MCF 10A (cell line): ENCODE measurements at regions of chr21 and their contacts with region 1.

Region 1: GRCh38 chr21:36945496-36946138 is 20.9 kb downstream of the HLCS start:
- DNase-seq: no peak
- H3K4me3 Mint-ChIP-seq: no peak overlapping the region
- H3K27ac Mint-ChIP-seq: no peak overlapping the region
- H3K4me1 Mint-ChIP-seq: peaks cover 7% of the 10 kb centered on the region
- H3K27me3 Mint-ChIP-seq: no peaks in the 10 kb centered on the region
- CTCF ChIP-seq: no peak

Region 2: DNA sequence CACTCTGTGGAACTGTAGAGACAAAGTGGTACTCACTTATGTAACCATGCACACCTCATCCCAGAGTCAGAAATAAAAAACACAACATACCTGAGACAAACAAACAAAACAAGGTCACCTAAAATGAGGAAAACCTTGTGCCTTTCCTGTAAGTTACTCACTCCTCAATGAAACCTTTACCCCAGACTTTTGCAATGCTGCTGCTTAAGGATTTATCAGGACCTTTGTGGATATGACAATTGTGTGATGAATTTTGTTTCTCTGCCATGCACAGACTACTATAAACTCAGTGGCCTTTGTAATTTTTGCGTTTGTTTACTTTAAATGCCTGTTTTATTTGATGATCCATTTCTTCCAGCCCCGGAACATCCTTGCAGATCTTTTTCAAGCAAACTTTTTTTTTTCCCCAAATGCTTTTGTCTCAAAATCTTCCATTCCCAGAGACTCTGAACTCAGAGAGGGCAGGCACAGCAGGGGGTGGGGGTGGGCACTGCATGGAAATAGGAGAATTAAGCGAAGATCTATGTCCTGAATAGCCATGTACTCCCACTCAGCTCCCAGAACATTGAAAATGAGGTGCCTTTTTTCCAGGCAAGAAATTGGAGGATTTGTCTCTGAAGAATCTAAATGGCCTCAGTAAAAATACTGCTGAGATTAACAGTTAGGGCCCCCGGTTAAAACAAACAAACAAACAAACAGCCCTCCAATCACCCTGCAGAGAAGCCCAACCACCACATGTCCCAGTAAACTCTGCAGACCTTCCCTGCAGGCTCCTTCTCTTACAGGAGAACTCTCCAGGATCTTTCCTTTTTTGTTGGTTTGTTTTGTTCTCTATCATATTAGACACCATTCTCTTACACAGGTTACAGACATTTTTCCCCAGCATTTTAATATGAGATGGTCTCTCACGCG is 269.3 kb before region 1 on chr21:
- CTCF ChIA-PET with region 1: no interaction called
- POLR2A ChIA-PET with region 1: no interaction called
- intact Hi-C with region 1: no loop called
- DNase-seq: no peak
- H3K4me3 Mint-ChIP-seq: no peak overlapping the region
- H3K27ac Mint-ChIP-seq: no peak overlapping the region
- H3K4me1 Mint-ChIP-seq: peaks cover 15% of the 10 kb centered on the region
- H3K27me3 Mint-ChIP-seq: no peaks in the 10 kb centered on the region
- CTCF ChIP-seq: no peak

Region 3: DNA sequence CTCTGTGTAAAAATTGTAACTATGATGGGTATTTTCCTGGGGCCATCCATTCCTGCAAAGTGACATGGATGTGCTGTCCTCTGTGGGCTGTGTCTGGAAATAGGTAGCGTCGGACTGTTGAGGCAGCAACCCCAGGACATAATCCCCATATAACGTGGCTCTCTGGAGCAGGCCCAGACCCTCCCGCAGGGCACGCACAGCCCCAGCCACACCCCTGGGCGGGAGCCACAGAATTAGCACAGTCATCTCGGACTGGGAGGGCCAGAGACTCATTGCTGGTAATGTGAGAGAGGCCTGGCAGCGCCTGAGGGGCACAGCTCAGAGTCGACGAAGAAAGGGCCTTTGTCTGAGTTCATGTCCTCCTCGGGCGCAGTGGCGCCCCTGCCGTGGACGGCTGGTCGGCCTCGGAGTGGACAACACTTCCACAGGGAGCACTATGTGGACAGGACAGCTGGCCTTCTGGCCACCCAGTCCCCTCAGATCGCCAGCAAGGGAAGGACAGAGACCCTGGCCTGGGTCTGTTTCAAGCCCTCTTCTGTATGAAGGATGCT is 226.6 kb before region 1 on chr21:
- CTCF ChIA-PET with region 1: no interaction called
- POLR2A ChIA-PET with region 1: no interaction called
- intact Hi-C with region 1: no loop called
- DNase-seq: peak; percentile 89
- H3K4me3 Mint-ChIP-seq: no peak overlapping the region
- H3K27ac Mint-ChIP-seq: peak overlapping the region; percentile 76
- H3K4me1 Mint-ChIP-seq: peaks cover 12% of the 10 kb centered on the region
- H3K27me3 Mint-ChIP-seq: no peaks in the 10 kb centered on the region
- CTCF ChIP-seq: no peak

Region 4: DNA sequence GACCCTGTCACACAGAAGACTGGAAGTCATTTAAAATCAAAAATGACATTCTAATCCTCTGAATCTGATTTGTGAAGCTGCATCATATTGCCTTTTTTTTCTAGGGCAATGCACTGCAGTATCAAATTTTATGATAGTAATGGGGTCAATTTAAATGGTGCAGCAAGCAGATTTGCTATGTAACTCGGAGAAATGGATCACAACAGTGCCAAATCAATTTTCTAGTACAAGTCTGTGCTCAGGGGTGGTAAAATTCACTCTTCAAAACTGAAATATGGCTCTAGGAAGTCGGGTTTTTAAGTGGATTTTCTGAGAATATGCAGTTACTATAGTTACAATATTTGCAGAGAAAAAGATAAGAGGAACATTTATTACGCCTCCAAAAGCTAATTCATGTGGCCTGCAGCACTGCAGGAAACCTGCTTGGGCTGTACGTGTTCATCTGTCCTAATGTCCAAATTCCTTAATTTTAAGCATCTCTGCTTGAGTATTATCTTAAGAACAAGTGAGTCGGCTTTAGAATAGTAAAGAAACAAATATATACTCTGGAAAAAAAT is 10.7 kb before region 1 on chr21:
- CTCF ChIA-PET with region 1: interaction called, 10 read pairs
- POLR2A ChIA-PET with region 1: no interaction called
- intact Hi-C with region 1: no loop called
- DNase-seq: no peak
- H3K4me3 Mint-ChIP-seq: no peak overlapping the region
- H3K27ac Mint-ChIP-seq: no peak overlapping the region
- H3K4me1 Mint-ChIP-seq: no peaks in the 10 kb centered on the region
- H3K27me3 Mint-ChIP-seq: no peaks in the 10 kb centered on the region
- CTCF ChIP-seq: no peak